ENCODE measurements at regions of chr3 and their contacts with region 1.

Region 1: GRCh38 chr3:81985996-81986723 is 224.7 kb upstream of the GBE1 start:
- DNase-seq: no peak
- ATAC-seq: no peak
- H3K4me3 ChIP-seq: no peak overlapping the region
- H3K4me3 Mint-ChIP-seq: no peak overlapping the region
- H3K27ac ChIP-seq: no peak overlapping the region
- H3K27ac Mint-ChIP-seq: no peak overlapping the region
- H3K4me1 ChIP-seq: no peaks in the 10 kb centered on the region
- H3K4me1 Mint-ChIP-seq: no peaks in the 10 kb centered on the region
- H3K27me3 ChIP-seq: no peaks in the 10 kb centered on the region
- H3K27me3 Mint-ChIP-seq: no peaks in the 10 kb centered on the region

Region 2: GRCh38 chr3:81354119-81354518 is 632.0 kb before region 1 on chr3:
- CTCF ChIA-PET with region 1: interaction called in 1 of 2 experiments, 10 read pairs
- POLR2A ChIA-PET with region 1: no interaction called
- DNase-seq: no peak
- ATAC-seq: no peak
- H3K4me3 ChIP-seq: no peak overlapping the region
- H3K4me3 Mint-ChIP-seq: no peak overlapping the region
- H3K27ac ChIP-seq: no peak overlapping the region
- H3K27ac Mint-ChIP-seq: no peak overlapping the region
- H3K4me1 ChIP-seq: no peaks in the 10 kb centered on the region
- H3K4me1 Mint-ChIP-seq: no peaks in the 10 kb centered on the region
- H3K27me3 ChIP-seq: no peaks in the 10 kb centered on the region
- H3K27me3 Mint-ChIP-seq: no peaks in the 10 kb centered on the region

Region 3: GRCh38 chr3:82100378-82100777 is 114.2 kb after region 1 on chr3:
- CTCF ChIA-PET with region 1: no interaction called
- POLR2A ChIA-PET with region 1: no interaction called
- DNase-seq: no peak
- ATAC-seq: no peak
- H3K4me3 ChIP-seq: no peak overlapping the region
- H3K4me3 Mint-ChIP-seq: no peak overlapping the region
- H3K27ac ChIP-seq: no peak overlapping the region
- H3K27ac Mint-ChIP-seq: no peak overlapping the region
- H3K4me1 ChIP-seq: no peaks in the 10 kb centered on the region
- H3K4me1 Mint-ChIP-seq: no peaks in the 10 kb centered on the region
- H3K27me3 ChIP-seq: no peaks in the 10 kb centered on the region
- H3K27me3 Mint-ChIP-seq: no peaks in the 10 kb centered on the region

Region 4: GRCh38 chr3:82202269-82202668 is 216.1 kb after region 1 on chr3:
- CTCF ChIA-PET with region 1: no interaction called
- POLR2A ChIA-PET with region 1: no interaction called
- DNase-seq: no peak
- ATAC-seq: no peak
- H3K4me3 ChIP-seq: no peak overlapping the region
- H3K4me3 Mint-ChIP-seq: no peak overlapping the region
- H3K27ac ChIP-seq: no peak overlapping the region
- H3K27ac Mint-ChIP-seq: no peak overlapping the region
- H3K4me1 ChIP-seq: no peaks in the 10 kb centered on the region
- H3K4me1 Mint-ChIP-seq: no peaks in the 10 kb centered on the region
- H3K27me3 ChIP-seq: no peaks in the 10 kb centered on the region
- H3K27me3 Mint-ChIP-seq: no peaks in the 10 kb centered on the region

Measured in T-cell (primary cell).